PC-9 (cell line): ENCODE measurements at regions of chr16 and their contacts with region 1.

Region 1: GRCh38 chr16:57893559-57894389 is 77.2 kb downstream of the CNGB1 start:
- DNase-seq: peak; percentile 62 to 99
- H3K4me3 ChIP-seq: peak overlapping the region; percentile 10; the same call in 1 of the 2 replicates
- H3K27ac ChIP-seq: peak overlapping the region; percentile 97
- H3K4me1 ChIP-seq: peaks cover 56% of the 10 kb centered on the region
- H3K27me3 ChIP-seq: no peaks in the 10 kb centered on the region
- CTCF ChIP-seq: no peak

Region 2: DNA sequence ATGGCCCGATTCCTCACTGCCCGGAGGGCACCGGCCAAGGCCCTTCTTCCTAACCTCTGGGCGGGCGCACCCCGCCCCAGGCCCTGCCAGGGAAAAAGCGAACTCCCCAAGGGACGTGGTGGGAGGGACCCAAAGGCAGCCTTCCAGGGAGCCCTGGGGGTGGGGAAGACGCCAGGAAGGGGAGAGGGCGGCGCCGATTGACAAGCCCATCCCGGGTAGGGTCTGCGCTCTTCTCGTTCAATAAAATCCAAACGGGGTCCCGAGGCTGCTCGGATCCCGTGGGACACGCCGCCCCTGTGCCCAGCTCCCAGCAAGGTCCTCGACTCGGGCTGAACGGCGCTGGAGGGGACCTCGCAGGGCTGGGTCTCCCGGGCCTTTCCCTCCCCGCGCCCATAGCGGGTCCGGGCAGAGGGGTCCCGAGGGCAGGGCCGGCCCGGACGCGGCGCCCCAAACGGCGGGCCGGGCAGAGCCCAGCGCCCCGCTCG is 91.9 kb before region 1 on chr16:
- CTCF ChIA-PET with region 1: interaction called, 3 read pairs
- POLR2A ChIA-PET with region 1: no interaction called
- intact Hi-C with region 1: loop called (anchors 2 kb)
- DNase-seq: peak; percentile 47 to 50
- H3K4me3 ChIP-seq: peak overlapping the region; percentile 63
- H3K27ac ChIP-seq: peak overlapping the region; percentile 85
- H3K4me1 ChIP-seq: peaks cover 57% of the 10 kb centered on the region
- H3K27me3 ChIP-seq: no peaks in the 10 kb centered on the region
- CTCF ChIP-seq: no peak